ENCODE measurements at regions of chr11 and their contacts with region 1.

Region 1: GRCh38 chr11:94897330-94897768 is 76.0 kb downstream of the CWC15 start:
- DNase-seq: peak; percentile 54 to 67
- H3K4me3 ChIP-seq: no peak overlapping the region
- H3K27ac ChIP-seq: no peak overlapping the region
- H3K4me1 ChIP-seq: no peaks in the 10 kb centered on the region
- H3K27me3 ChIP-seq: no peaks in the 10 kb centered on the region
- CTCF ChIP-seq: peak; percentile 74 to 87 (median 80)
- POLR2A ChIP-seq: no peak

Region 2: DNA sequence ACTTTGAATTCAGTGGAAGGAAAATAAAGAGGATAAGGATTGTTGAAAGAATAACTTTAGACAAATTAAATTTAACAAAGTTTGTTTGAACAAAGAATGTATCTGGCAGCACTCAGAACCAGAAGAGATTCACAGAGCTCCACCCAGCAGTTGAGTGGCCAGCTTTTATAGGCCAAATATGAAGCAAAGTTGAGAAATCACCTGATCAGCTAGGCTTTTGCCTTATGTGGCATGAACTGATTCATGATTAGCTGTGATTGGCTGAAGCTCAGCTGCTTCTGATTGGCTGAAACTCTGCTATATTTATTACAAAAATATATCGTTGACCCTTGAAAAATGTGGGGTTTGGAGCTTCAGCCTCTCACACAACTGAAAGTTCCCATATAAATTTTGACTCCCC is 267.6 kb before region 1 on chr11:
- intact Hi-C with region 1: loop called (anchors 5 kb)
- DNase-seq: no peak
- H3K4me3 ChIP-seq: no peak overlapping the region
- H3K27ac ChIP-seq: no peak overlapping the region
- H3K4me1 ChIP-seq: no peaks in the 10 kb centered on the region
- H3K27me3 ChIP-seq: no peaks in the 10 kb centered on the region
- CTCF ChIP-seq: no peak
- POLR2A ChIP-seq: no peak

Measured in uterus (tissue), 4 donors.